B cell (primary cell): ENCODE measurements at regions of chr19 and their contacts with region 1.

Region 1: GRCh38 chr19:6092329-6093286 is 17.7 kb downstream of the RFX2 start:
- DNase-seq: no peak
- ATAC-seq: no peak
- H3K4me3 ChIP-seq: no peak overlapping the region
- H3K4me3 Mint-ChIP-seq: no peak overlapping the region
- H3K27ac ChIP-seq: no peak overlapping the region
- H3K27ac Mint-ChIP-seq: no peak overlapping the region
- H3K4me1 ChIP-seq: peaks cover 11% of the 10 kb centered on the region in 2 donors
- H3K4me1 Mint-ChIP-seq: peaks cover 9% of the 10 kb centered on the region
- H3K27me3 ChIP-seq: no peaks in the 10 kb centered on the region
- H3K27me3 Mint-ChIP-seq: no peaks in the 10 kb centered on the region
- CTCF ChIP-seq: no peak

Region 2: GRCh38 chr19:5336195-5336965 is 756.2 kb before region 1 on chr19:
- CTCF ChIA-PET with region 1: no interaction called
- POLR2A ChIA-PET with region 1: no interaction called
- intact Hi-C with region 1: no loop called
- DNase-seq: peak; percentile 33
- ATAC-seq: no peak
- H3K4me3 ChIP-seq: no peak overlapping the region
- H3K4me3 Mint-ChIP-seq: peak overlapping the region; percentile 49
- H3K27ac ChIP-seq: no peak overlapping the region
- H3K27ac Mint-ChIP-seq: no peak overlapping the region
- H3K4me1 ChIP-seq: peaks cover 38% of the 10 kb centered on the region in 2 donors
- H3K4me1 Mint-ChIP-seq: peaks cover 30% of the 10 kb centered on the region
- H3K27me3 ChIP-seq: peaks cover 0 to 81% (median 43%) of the 10 kb centered on the region in 4 experiments
- H3K27me3 Mint-ChIP-seq: peaks cover 49% of the 10 kb centered on the region
- CTCF ChIP-seq: no peak

Region 3: DNA sequence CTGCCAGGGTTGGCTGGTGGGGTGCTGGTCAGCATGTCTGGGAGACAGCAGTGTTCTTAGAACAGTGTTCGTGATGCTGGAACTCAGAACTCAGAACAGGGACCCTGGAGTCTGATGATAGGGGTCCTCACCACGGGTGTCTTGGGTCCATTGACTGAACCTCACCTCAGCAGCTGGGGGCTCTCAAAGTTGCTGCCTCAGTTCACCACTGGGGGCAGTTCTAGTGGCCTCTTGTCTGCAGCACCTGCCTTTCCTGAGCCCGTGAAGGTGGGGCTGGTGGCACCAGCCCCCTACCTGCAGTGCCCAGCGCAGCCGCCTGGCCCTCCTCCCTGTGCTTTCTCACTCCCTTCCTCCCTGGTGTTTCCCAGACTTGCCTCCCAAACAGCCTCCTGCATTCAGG is 441.2 kb before region 1 on chr19:
- CTCF ChIA-PET with region 1: no interaction called
- POLR2A ChIA-PET with region 1: no interaction called
- intact Hi-C with region 1: no loop called
- DNase-seq: no peak
- ATAC-seq: no peak
- H3K4me3 ChIP-seq: no peak overlapping the region
- H3K4me3 Mint-ChIP-seq: no peak overlapping the region
- H3K27ac ChIP-seq: no peak overlapping the region
- H3K27ac Mint-ChIP-seq: no peak overlapping the region
- H3K4me1 ChIP-seq: no peaks in the 10 kb centered on the region
- H3K4me1 Mint-ChIP-seq: peaks cover 1% of the 10 kb centered on the region
- H3K27me3 ChIP-seq: no peaks in the 10 kb centered on the region
- H3K27me3 Mint-ChIP-seq: no peaks in the 10 kb centered on the region
- CTCF ChIP-seq: no peak

Region 4: DNA sequence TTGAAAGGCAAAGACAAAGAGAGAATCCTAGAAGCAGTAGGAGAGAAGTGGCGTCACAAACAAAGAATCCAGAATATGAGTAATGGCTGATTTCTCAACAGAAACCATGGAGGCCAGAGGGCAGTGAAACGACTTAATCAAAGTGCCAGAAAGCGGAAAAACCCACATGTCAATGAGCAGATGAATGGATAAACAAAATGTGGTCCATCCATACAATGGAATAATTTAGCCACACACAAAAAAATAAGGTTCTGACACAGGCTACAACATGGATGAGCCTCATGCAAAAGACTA is 62.4 kb before region 1 on chr19:
- CTCF ChIA-PET with region 1: no interaction called
- POLR2A ChIA-PET with region 1: interaction called, 11 read pairs
- intact Hi-C with region 1: no loop called
- DNase-seq: no peak
- ATAC-seq: no peak
- H3K4me3 ChIP-seq: no peak overlapping the region
- H3K4me3 Mint-ChIP-seq: no peak overlapping the region
- H3K27ac ChIP-seq: no peak overlapping the region
- H3K27ac Mint-ChIP-seq: no peak overlapping the region
- H3K4me1 ChIP-seq: no peaks in the 10 kb centered on the region
- H3K4me1 Mint-ChIP-seq: no peaks in the 10 kb centered on the region
- H3K27me3 ChIP-seq: no peaks in the 10 kb centered on the region
- H3K27me3 Mint-ChIP-seq: no peaks in the 10 kb centered on the region
- CTCF ChIP-seq: no peak